Activated CD8-positive, alpha-beta T cell treated with anti-CD3 and anti-CD28 coated beads for 36 hours (primary cell): ENCODE measurements at regions of chr3 and their contacts with region 1.

Region 1: GRCh38 chr3:160413613-160414248 is 14.3 kb downstream of the SMC4 start:
- DNase-seq: peak; percentile 61
- ATAC-seq: peak; percentile 78
- H3K4me3 Mint-ChIP-seq: no peak overlapping the region
- H3K27ac Mint-ChIP-seq: no peak overlapping the region
- H3K4me1 Mint-ChIP-seq: peaks cover 2% of the 10 kb centered on the region
- H3K27me3 Mint-ChIP-seq: no peaks in the 10 kb centered on the region
- CTCF ChIP-seq: peak; percentile 92

Region 2: DNA sequence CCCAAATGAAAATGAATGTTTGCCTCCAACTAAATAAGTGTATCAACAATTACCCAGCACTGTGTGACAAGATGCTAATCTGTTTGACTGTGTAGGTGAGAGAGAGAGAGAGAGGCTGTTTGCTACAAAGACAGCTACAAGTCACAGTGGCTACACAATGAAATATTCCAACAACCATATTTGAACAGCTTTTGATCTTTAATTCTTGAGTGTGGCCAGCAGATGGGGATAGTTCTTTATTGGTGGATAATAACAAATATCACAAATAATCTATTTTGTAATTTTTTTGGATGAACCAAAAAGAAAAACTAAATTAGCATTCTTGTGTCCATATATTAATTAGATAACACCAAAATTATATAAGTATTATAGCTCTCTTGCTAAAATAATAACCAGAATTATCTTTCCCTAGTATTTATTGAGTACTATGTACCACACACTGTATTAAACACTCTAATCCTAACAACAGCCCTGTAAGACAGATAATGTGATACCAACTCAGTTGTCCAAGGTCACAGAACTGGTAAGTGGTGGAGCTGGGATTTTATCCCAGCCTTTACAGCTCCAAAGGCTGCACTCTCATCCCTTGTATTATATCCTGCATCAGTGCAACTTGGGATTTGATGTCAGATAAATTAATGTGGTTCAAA is 250.4 kb before region 1 on chr3:
- CTCF ChIA-PET with region 1: interaction called, 4 read pairs
- POLR2A ChIA-PET with region 1: no interaction called
- intact Hi-C with region 1: loop called (anchors 1 kb)
- DNase-seq: no peak
- ATAC-seq: no peak
- H3K4me3 Mint-ChIP-seq: no peak overlapping the region
- H3K27ac Mint-ChIP-seq: no peak overlapping the region
- H3K4me1 Mint-ChIP-seq: no peaks in the 10 kb centered on the region
- H3K27me3 Mint-ChIP-seq: peaks cover 7% of the 10 kb centered on the region
- CTCF ChIP-seq: peak; percentile 58

Region 3: DNA sequence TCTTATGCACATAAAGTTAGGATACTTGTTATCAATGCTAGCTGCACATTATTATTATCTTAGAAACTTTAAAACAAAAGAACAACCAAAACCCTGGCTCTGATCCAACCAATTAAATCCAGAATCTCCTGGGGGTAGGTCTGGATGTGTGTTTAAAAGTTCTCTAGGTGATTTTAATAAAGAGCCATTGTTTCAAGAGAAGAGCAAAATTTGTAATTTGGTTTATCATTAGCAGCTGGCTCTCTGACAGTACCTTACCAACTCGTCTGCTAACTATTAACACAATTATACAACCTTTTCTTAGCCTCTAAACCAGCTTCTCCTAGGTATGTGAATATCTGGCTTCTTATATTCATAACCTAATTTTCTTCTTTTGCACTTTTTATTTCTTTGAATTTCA is 83.6 kb before region 1 on chr3:
- CTCF ChIA-PET with region 1: no interaction called
- POLR2A ChIA-PET with region 1: no interaction called
- intact Hi-C with region 1: no loop called
- DNase-seq: no peak
- ATAC-seq: no peak
- H3K4me3 Mint-ChIP-seq: no peak overlapping the region
- H3K27ac Mint-ChIP-seq: no peak overlapping the region
- H3K4me1 Mint-ChIP-seq: no peaks in the 10 kb centered on the region
- H3K27me3 Mint-ChIP-seq: no peaks in the 10 kb centered on the region
- CTCF ChIP-seq: no peak

Region 4: GRCh38 chr3:160399125-160400029 is 14.4 kb before region 1 on chr3 and contains the starts of genes IFT80 and SMC4:
- CTCF ChIA-PET with region 1: interaction called, 11 read pairs
- POLR2A ChIA-PET with region 1: interaction called, 17 read pairs
- intact Hi-C with region 1: no loop called
- DNase-seq: peak; percentile 97
- ATAC-seq: peak; percentile 97
- H3K4me3 Mint-ChIP-seq: peak within 1 kb of the TSS; percentile 95
- H3K27ac Mint-ChIP-seq: peak within 1 kb of the TSS; percentile 99
- H3K4me1 Mint-ChIP-seq: peaks cover 22% of the 10 kb centered on the region
- H3K27me3 Mint-ChIP-seq: peaks cover 6% of the 10 kb centered on the region
- CTCF ChIP-seq: no peak
- total RNA-seq, gene IFT80: 9.2 to 10.4 TPM
- total RNA-seq, gene SMC4: 149 to 154 TPM

Region 5: DNA sequence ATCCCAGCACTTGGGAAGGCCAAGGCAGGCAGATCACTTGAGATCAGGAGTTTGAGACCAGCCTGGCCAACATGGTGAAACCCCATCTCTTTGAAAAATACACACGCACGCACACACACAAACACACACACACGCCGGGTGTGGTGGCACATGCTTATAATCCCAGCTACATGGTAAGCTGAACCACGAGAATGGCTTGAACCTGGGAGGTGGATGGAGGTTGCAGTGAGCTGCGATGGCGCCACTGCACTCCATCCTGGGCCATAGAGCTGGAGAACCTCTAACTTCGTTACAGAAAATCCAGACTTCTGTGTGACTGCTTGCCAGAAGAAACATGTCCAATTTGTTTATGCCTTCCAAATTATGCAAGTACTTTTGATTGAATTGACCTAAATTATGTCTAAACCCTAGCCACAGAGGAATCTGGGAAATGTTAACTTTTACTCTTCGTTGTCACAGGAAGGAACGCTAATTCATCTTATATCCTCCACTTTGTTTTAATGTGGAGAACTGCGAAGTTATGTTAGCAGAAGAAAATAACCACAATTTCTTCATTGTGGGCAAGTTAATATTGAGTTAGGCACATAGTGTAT is 14.2 kb after region 1 on chr3:
- CTCF ChIA-PET with region 1: interaction called, 43 read pairs
- POLR2A ChIA-PET with region 1: interaction called, 3 read pairs
- intact Hi-C with region 1: no loop called
- DNase-seq: no peak
- ATAC-seq: no peak
- H3K4me3 Mint-ChIP-seq: no peak overlapping the region
- H3K27ac Mint-ChIP-seq: no peak overlapping the region
- H3K4me1 Mint-ChIP-seq: no peaks in the 10 kb centered on the region
- H3K27me3 Mint-ChIP-seq: no peaks in the 10 kb centered on the region
- CTCF ChIP-seq: no peak

Region 6: DNA sequence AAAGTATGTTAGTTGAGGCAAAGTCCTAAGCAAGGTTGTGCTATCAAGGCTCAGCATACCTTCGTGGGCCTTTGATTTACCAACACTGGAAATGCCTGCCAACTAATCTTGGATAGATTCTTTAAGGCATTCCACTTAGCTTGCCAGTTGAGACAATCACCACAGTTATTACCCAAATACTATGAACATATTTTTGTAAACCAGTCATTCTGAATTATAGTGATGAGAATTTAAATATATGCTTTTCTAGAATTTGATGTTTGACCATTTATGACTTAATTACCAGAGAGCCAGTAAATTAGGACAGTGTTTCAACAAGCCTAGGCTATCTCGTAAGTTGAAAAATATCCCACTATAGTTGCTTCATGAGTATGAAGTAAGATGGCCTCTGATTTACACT is 20.3 kb after region 1 on chr3:
- CTCF ChIA-PET with region 1: interaction called, 43 read pairs
- POLR2A ChIA-PET with region 1: interaction called, 7 read pairs
- intact Hi-C with region 1: no loop called
- DNase-seq: no peak
- ATAC-seq: no peak
- H3K4me3 Mint-ChIP-seq: no peak overlapping the region
- H3K27ac Mint-ChIP-seq: no peak overlapping the region
- H3K4me1 Mint-ChIP-seq: peaks cover 22% of the 10 kb centered on the region
- H3K27me3 Mint-ChIP-seq: no peaks in the 10 kb centered on the region
- CTCF ChIP-seq: no peak

Region 7: DNA sequence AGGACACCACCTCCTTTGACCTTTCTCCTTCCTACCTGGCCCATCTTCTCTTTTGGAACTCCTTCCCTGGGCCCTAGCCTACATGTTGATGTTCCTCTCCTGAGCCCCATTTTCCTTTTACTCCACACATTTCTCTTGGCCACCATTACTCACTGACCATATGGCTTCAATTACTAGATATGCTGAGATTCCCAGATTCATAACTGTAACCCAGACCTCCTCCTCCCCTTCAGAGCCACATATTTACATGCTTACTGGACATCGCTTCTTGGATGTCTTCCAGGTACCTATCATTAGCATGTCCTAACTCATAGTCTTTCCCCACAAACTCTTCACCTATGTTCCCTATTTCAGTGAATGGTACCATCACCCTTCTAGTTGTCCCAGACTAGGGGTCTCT is 60.2 kb after region 1 on chr3:
- CTCF ChIA-PET with region 1: no interaction called
- POLR2A ChIA-PET with region 1: no interaction called
- intact Hi-C with region 1: no loop called
- DNase-seq: no peak
- ATAC-seq: no peak
- H3K4me3 Mint-ChIP-seq: no peak overlapping the region
- H3K27ac Mint-ChIP-seq: no peak overlapping the region
- H3K4me1 Mint-ChIP-seq: no peaks in the 10 kb centered on the region
- H3K27me3 Mint-ChIP-seq: peaks cover 10% of the 10 kb centered on the region
- CTCF ChIP-seq: no peak